Activated CD4-positive, alpha-beta memory T cell treated with anti-CD3 and anti-CD28 coated beads for 36 hours (primary cell): ENCODE measurements at regions of chr12 and their contacts with region 1.

Region 1: GRCh38 chr12:66941150-66941549 is 262.3 kb upstream of the GRIP1 start:
- DNase-seq: no peak
- H3K4me3 Mint-ChIP-seq: no peak overlapping the region
- H3K27ac Mint-ChIP-seq: no peak overlapping the region
- H3K4me1 Mint-ChIP-seq: peaks cover 8% of the 10 kb centered on the region
- H3K27me3 Mint-ChIP-seq: peaks cover 2% of the 10 kb centered on the region

Region 2: GRCh38 chr12:66929121-66929520 is 12.0 kb before region 1 on chr12:
- CTCF ChIA-PET with region 1: no interaction called
- POLR2A ChIA-PET with region 1: interaction called, 4 read pairs
- intact Hi-C with region 1: loop called (anchors 1 kb)
- DNase-seq: peak; percentile 62
- H3K4me3 Mint-ChIP-seq: no peak overlapping the region
- H3K27ac Mint-ChIP-seq: no peak overlapping the region
- H3K4me1 Mint-ChIP-seq: peaks cover 15% of the 10 kb centered on the region
- H3K27me3 Mint-ChIP-seq: peaks cover 8% of the 10 kb centered on the region